Heart right ventricle (tissue), 16 donors: ENCODE measurements at regions of chr18 and their contacts with region 1.

Region 1: DNA sequence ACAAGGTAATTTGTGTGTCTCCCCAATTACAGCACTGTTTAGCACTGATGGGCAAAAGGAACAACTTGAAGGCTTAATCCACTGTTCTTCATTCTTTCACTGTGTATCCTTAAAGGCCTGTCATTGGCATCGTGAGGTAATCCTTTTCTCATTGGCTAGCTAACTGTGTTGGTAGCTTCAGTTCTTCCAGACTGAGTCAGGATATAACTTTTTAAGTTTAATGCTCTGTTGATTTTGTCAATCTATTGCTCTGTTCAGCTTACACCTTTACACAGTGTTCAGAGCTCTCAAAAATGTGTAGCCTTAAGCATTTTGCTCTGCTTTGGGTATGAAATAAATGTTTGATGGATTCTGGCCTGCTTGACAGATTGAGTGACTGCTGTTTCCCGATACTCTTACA is 148.2 kb downstream of the KIAA1328 start:
- DNase-seq: no peak
- ATAC-seq: no peak
- H3K4me3 ChIP-seq: no peak overlapping the region
- H3K27ac ChIP-seq: no peak overlapping the region
- H3K4me1 ChIP-seq: no peaks in the 10 kb centered on the region
- H3K27me3 ChIP-seq: no peaks in the 10 kb centered on the region
- CTCF ChIP-seq: no peak

Region 2: DNA sequence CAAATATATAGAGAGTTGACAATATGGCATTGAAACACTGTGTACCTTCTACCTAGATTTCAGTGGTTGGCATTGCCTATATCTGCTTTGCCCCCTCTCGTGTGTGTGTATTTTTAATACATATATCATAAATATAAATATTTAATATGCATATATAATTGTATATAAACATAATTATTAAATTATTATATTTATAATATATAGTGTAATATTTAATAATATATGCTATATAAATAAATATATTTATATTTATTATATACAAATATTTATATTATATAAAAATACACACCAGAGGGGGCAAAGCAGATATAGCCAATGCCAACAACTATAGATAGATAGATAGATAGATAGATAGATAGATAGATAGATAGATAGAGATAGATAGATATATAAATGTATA is 24.1 kb before region 1 on chr18:
- intact Hi-C with region 1: loop called in 1 of 10 experiments (anchors 2 kb)
- DNase-seq: no peak
- ATAC-seq: no peak
- H3K4me3 ChIP-seq: no peak overlapping the region
- H3K27ac ChIP-seq: no peak overlapping the region
- H3K4me1 ChIP-seq: no peaks in the 10 kb centered on the region
- H3K27me3 ChIP-seq: no peaks in the 10 kb centered on the region
- CTCF ChIP-seq: no peak

Region 3: DNA sequence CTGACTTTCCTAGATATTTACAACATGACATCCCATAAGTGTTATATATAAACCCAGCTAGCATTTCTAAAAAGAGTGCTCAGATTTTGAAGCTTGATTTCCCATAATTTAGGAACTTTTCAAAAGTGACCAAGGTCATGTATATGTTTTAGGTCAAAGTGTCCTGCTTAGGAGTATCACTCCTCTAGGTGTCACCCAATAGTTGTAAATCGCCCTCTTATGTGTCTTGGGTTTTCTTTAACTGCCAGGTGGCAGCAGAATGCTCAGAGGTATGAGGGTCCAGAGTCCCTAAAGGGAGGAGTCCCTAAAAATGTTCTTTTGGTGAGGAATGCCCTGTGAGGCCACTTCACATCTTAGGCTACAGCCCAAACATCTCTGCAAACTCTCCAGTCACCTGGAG is 230.2 kb after region 1 on chr18:
- intact Hi-C with region 1: no loop called
- DNase-seq: no peak
- ATAC-seq: no peak
- H3K4me3 ChIP-seq: no peak overlapping the region
- H3K27ac ChIP-seq: no peak overlapping the region
- H3K4me1 ChIP-seq: no peaks in the 10 kb centered on the region
- H3K27me3 ChIP-seq: no peaks in the 10 kb centered on the region
- CTCF ChIP-seq: no peak